OCI-LY7 (cell line): ENCODE measurements at regions of chr5 and their contacts with region 1.

Region 1: DNA sequence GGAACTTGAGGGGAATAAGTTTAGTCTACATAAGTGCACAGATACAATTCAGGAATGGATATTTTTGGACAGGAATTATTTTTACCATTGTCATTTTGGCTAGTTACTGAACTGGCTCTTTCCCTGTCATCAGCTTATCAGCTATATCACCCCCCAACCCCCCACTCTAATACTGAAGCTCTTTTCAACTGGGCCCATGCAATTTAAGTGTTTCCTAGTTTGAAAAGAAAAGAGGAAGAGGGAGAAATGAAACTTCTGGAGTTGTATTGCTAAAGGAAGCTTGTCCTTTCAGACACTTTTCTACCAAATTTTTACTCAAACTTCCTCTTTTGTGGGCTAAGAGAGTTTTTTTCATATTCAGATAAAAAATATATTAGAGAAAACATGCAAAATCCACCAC is 18.5 kb upstream of the TIMD4 start:
- DNase-seq: peak; percentile 61
- H3K4me3 ChIP-seq: peak overlapping the region; percentile 49
- H3K27ac ChIP-seq: peak overlapping the region; percentile 95
- H3K4me1 ChIP-seq: peaks cover 69% of the 10 kb centered on the region
- CTCF ChIP-seq: no peak

Region 2: GRCh38 chr5:156560002-156560401 is 421.5 kb before region 1 on chr5:
- CTCF ChIA-PET with region 1: no interaction called
- POLR2A ChIA-PET with region 1: no interaction called
- intact Hi-C with region 1: no loop called
- DNase-seq: no peak
- H3K4me3 ChIP-seq: no peak overlapping the region
- H3K27ac ChIP-seq: no peak overlapping the region
- H3K4me1 ChIP-seq: no peaks in the 10 kb centered on the region
- CTCF ChIP-seq: no peak

Region 3: GRCh38 chr5:156879665-156880285 is 101.7 kb before region 1 on chr5:
- CTCF ChIA-PET with region 1: interaction called, 6 read pairs
- POLR2A ChIA-PET with region 1: interaction called, 79 read pairs
- intact Hi-C with region 1: loop called (anchors 1 kb)
- DNase-seq: peak; percentile 89
- H3K4me3 ChIP-seq: peak overlapping the region; percentile 11
- H3K27ac ChIP-seq: peak overlapping the region; percentile 98
- H3K4me1 ChIP-seq: peaks cover 72% of the 10 kb centered on the region
- CTCF ChIP-seq: peak; percentile 47

Region 4: DNA sequence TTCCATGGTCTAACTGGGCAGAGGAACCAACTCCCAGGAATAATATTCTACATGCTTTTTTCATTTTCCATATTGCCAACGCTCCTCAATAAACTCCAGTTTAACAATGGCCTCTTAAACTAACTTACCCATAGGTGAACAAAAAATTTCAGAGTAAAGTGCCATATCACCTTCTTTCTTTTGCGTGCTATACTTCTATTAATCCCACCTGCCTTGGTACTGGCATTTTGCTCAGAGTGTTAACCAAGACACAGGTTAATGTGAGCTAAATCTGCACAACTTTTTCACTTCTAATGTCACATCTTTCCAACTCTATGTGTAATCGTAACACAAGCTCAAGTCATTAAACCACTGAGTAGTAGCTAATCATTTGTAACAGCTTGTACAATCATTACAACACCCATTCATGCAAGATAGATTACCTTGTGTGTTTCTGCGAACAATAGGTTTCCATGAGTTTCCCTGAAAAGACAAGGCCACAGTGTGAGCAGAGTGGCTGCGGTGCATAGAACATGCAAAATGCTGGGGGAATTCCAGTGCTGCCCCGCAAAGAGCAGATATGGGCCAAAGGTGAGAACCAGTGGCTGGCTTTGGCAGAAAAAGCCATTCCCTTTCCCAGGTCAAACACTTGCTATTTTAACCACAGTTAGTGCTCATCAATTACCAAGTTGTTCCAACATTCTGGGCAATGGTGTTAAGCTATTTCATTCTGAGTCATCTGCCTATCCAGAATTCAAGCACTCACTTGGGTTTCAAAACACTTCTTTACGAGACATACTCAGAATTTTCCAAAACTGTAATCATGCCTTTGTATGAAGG is 61.2 kb before region 1 on chr5:
- CTCF ChIA-PET with region 1: no interaction called
- POLR2A ChIA-PET with region 1: interaction called, 21 read pairs
- intact Hi-C with region 1: no loop called
- DNase-seq: no peak
- H3K4me3 ChIP-seq: peak overlapping the region; percentile 7
- H3K27ac ChIP-seq: peak overlapping the region; percentile 83
- H3K4me1 ChIP-seq: peaks cover 96% of the 10 kb centered on the region
- CTCF ChIP-seq: no peak

Region 5: GRCh38 chr5:157026789-157027424 is 45.4 kb after region 1 on chr5:
- CTCF ChIA-PET with region 1: no interaction called
- POLR2A ChIA-PET with region 1: interaction called, 4 read pairs
- intact Hi-C with region 1: loop called (anchors 2 kb)
- DNase-seq: peak; percentile 64
- H3K4me3 ChIP-seq: no peak overlapping the region
- H3K27ac ChIP-seq: no peak overlapping the region
- H3K4me1 ChIP-seq: peaks cover 59% of the 10 kb centered on the region
- CTCF ChIP-seq: peak; percentile 97

Region 6: GRCh38 chr5:157130925-157131324 is 149.4 kb after region 1 on chr5:
- CTCF ChIA-PET with region 1: no interaction called
- POLR2A ChIA-PET with region 1: interaction called, 7 read pairs
- intact Hi-C with region 1: loop called (anchors 2 kb)
- DNase-seq: peak; percentile 66
- H3K4me3 ChIP-seq: no peak overlapping the region
- H3K27ac ChIP-seq: peak overlapping the region; percentile 40
- H3K4me1 ChIP-seq: peaks cover 50% of the 10 kb centered on the region
- CTCF ChIP-seq: no peak

Region 7: GRCh38 chr5:157366741-157367674 is 385.5 kb after region 1 on chr5:
- CTCF ChIA-PET with region 1: no interaction called
- POLR2A ChIA-PET with region 1: no interaction called
- intact Hi-C with region 1: no loop called
- DNase-seq: peak; percentile 31
- H3K4me3 ChIP-seq: no peak overlapping the region
- H3K27ac ChIP-seq: no peak overlapping the region
- H3K4me1 ChIP-seq: no peaks in the 10 kb centered on the region
- CTCF ChIP-seq: peak; percentile 58

Region 8: GRCh38 chr5:157431544-157432200 is 450.2 kb after region 1 on chr5:
- CTCF ChIA-PET with region 1: no interaction called
- POLR2A ChIA-PET with region 1: no interaction called
- intact Hi-C with region 1: no loop called
- DNase-seq: peak; percentile 82
- H3K4me3 ChIP-seq: no peak overlapping the region
- H3K27ac ChIP-seq: no peak overlapping the region
- H3K4me1 ChIP-seq: peaks cover 9% of the 10 kb centered on the region
- CTCF ChIP-seq: peak; percentile 87